Adrenal gland (tissue), 19 donors: ENCODE measurements at regions of chr1 and their contacts with region 1.

Region 1: GRCh38 chr1:234065794-234066447 is 161.4 kb downstream of the SLC35F3 start:
- DNase-seq: peak; percentile 67 to 91 (median 82)
- H3K4me3 ChIP-seq: no peak overlapping the region
- H3K27ac ChIP-seq: no peak overlapping the region
- H3K4me1 ChIP-seq: no peaks in the 10 kb centered on the region
- H3K27me3 ChIP-seq: no peaks in the 10 kb centered on the region
- CTCF ChIP-seq: peak; percentile 54 to 79 (median 71)
- POLR2A ChIP-seq: no peak

Region 2: DNA sequence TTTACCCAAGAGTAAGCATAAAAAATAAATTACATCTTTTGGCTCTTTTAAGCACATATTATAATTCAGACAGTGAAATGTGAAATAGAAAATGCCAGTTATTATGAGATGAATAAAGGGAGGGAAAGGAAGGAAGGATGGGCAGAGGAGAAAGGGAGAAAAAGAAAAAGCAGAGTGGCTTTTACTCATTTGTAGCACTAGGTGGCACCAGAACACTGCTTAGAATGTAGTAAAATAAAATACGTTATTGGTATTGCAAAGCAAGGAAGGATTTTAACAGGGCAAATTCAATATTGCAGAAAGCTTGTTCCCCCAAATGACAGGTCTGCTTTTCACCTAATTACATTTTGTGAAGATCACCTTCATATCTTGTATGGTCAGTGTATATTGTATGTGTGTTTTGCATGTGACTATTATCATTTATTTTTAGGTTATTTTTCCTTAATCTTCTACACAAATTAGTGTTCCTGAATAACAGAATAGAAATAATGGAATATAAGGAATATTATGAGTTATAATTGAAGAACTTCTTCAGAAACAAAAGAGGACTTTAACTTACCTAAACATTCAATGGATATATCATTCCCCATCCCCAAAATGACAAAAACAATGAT is 761.3 kb before region 1 on chr1:
- intact Hi-C with region 1: loop called in 1 of 2 experiments (anchors 10 kb)
- DNase-seq: no peak
- H3K4me3 ChIP-seq: no peak overlapping the region
- H3K27ac ChIP-seq: no peak overlapping the region
- H3K4me1 ChIP-seq: no peaks in the 10 kb centered on the region
- H3K27me3 ChIP-seq: no peaks in the 10 kb centered on the region
- CTCF ChIP-seq: peak; percentile 67 to 88 (median 82)
- POLR2A ChIP-seq: no peak

Region 3: GRCh38 chr1:233440951-233441401 is 624.9 kb before region 1 on chr1:
- intact Hi-C with region 1: loop called in 1 of 2 experiments (anchors 5 kb)
- DNase-seq: peak in 6 of 7 donors; percentile 27 to 50 (median 33)
- H3K4me3 ChIP-seq: no peak overlapping the region
- H3K27ac ChIP-seq: no peak overlapping the region
- H3K4me1 ChIP-seq: peaks cover 0 to 4% of the 10 kb centered on the region in 2 donors
- H3K27me3 ChIP-seq: no peaks in the 10 kb centered on the region
- CTCF ChIP-seq: peak; percentile 49 to 74 (median 66)
- POLR2A ChIP-seq: no peak

Region 4: DNA sequence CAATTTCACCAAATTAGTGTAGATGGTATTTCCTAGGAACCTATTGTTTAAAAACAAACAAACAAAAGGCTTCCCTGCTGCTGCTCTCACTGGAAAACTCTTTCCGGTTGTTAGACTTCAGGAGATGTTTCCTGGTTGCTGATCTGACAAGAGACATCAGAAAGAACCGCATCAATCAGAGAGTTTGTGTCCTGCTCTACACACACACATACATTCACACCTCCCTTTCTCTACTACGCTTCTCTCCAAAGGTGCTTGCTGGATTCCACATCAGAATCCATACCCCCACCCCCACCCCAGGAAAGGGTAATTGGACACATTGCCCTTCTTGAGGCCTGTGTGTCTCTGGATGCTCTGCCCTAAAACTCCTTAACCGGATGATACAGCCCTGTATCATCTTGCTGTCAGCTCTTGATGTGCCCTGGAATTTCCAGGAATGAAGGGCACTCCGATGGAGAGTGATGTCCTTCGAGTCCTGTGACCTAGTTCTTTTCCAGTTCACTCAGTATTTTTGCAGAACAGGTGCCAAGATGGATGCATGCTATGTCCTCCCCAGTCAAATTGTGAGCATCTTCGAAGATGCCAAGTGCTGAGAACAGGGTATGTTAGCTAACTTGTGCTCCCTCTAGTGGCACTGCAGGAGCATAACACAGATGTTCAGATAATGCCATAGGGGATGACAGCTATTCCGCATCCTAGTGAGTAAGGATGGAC is 275.1 kb before region 1 on chr1:
- intact Hi-C with region 1: no loop called
- DNase-seq: peak; percentile 23 to 62 (median 35)
- H3K4me3 ChIP-seq: no peak overlapping the region
- H3K27ac ChIP-seq: no peak overlapping the region
- H3K4me1 ChIP-seq: no peaks in the 10 kb centered on the region
- H3K27me3 ChIP-seq: no peaks in the 10 kb centered on the region
- CTCF ChIP-seq: peak; percentile 87 to 92 (median 90)
- POLR2A ChIP-seq: no peak

Region 5: GRCh38 chr1:234139966-234140365 is 74.0 kb after region 1 on chr1:
- intact Hi-C with region 1: no loop called
- DNase-seq: no peak
- H3K4me3 ChIP-seq: no peak overlapping the region
- H3K27ac ChIP-seq: no peak overlapping the region
- H3K4me1 ChIP-seq: no peaks in the 10 kb centered on the region
- H3K27me3 ChIP-seq: peaks cover 5% of the 10 kb centered on the region
- CTCF ChIP-seq: no peak
- POLR2A ChIP-seq: no peak

Region 6: GRCh38 chr1:234473118-234473517 is 407.2 kb after region 1 on chr1:
- intact Hi-C with region 1: no loop called
- DNase-seq: no peak
- H3K4me3 ChIP-seq: no peak overlapping the region
- H3K27ac ChIP-seq: no peak overlapping the region
- H3K4me1 ChIP-seq: peaks cover 0 to 20% of the 10 kb centered on the region in 2 donors
- H3K27me3 ChIP-seq: no peaks in the 10 kb centered on the region
- CTCF ChIP-seq: no peak
- POLR2A ChIP-seq: no peak